HEK293T (cell line): ENCODE measurements at regions of chr1 and their contacts with region 1.

Region 1: DNA sequence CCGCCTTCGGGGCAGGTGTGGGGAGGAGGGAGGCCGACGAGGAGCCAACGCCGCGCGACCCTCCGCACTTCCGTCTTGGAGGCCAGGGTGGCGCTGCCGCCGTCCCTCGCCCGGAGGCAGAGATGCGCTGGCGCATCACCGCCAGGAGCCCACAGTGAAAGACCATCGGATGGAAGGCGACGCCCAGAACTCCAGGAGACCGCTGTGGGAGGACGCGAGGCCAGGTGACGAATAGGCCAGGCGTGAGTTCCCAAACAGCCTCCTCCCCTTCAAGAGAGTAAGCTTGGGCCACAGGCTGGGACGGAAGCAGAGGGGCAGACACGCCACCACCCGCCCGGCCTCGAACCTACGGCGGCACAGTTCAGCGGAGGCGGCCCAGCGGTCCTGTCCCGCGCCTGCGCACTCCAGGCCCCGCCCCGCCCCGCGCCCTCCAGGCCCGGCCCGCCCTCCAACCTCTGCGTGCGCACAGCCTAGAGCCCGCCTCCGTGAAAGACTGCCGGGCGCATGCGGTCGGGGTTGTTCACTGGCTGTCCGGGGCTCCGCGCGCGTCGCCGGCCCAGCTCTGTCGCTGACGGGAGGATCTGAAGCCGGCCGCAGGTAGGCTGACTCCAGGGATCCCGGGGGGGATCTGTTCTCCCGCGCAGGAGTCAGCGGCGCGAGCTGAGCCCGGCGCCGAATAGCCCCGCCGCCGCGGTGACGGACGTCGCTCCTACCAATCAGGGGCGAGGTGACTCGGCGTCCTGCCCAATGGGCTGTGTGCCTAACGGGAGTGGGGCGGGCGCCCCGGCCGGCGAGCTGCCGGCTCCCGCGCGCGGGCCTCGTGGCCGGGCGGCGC is at the start of gene CTPS1:
- DNase-seq: peak; percentile 96

Region 2: DNA sequence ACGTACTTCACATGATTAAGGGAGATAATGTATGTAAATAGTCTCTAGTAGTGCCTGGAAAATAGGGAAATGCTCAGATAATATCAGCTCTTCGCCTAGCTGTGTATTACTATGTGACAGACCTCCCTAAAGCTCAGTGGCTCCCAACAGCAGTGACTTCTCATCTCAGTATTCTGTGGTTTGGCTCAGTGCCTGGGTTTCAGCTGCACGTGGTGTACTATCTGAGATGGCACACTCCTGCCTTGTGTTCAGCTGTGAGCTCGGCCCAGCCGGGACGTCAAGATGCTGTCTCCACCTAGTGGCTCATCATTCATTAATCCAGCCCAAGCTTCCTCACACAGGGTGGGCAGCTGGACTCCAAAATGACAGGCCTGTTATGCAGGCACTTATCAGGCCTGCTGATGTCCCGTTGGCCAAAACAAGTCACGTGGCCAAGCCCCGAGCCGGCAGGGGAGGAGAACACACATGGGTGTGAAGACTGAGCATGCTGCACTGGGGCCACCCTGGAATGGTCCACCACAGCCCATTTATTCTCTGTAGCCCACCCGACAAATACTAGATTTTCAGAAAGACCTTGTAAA is 24.3 kb after region 1 on chr1:
- CTCF ChIA-PET with region 1: no interaction called
- POLR2A ChIA-PET with region 1: interaction called, 24 read pairs
- DNase-seq: peak; percentile 34

Region 3: GRCh38 chr1:41021526-41022308 is 42.3 kb after region 1 on chr1 and contains the start of gene SLFNL1:
- CTCF ChIA-PET with region 1: no interaction called
- POLR2A ChIA-PET with region 1: interaction called, 10 read pairs
- DNase-seq: no peak

Region 4: GRCh38 chr1:41226815-41227434 is 247.5 kb after region 1 on chr1:
- CTCF ChIA-PET with region 1: no interaction called
- POLR2A ChIA-PET with region 1: no interaction called
- DNase-seq: no peak